Activated CD4-positive, alpha-beta T cell treated with anti-CD3 and anti-CD28 coated beads, Interleukin-2, amount 10 ng/mL, durations not matched to agents 24 days and 14 days (primary cell): ENCODE measurements at regions of chr20 and their contacts with region 1.

Region 1: GRCh38 chr20:8019246-8019997 is at the start of gene TMX4:
- DNase-seq: peak; percentile 97
- H3K4me3 Mint-ChIP-seq: peak within 1 kb of the TSS; percentile 92
- H3K27ac Mint-ChIP-seq: peak within 1 kb of the TSS; percentile 89
- H3K4me1 Mint-ChIP-seq: peaks cover 25% of the 10 kb centered on the region
- H3K27me3 Mint-ChIP-seq: peaks cover 3% of the 10 kb centered on the region
- total RNA-seq, gene TMX4: 27.2 and 32.5 TPM in 2 replicates

Region 2: GRCh38 chr20:7935027-7935551 is 84.3 kb before region 1 on chr20:
- intact Hi-C with region 1: loop called (anchors 5 kb)
- DNase-seq: no peak
- H3K4me3 Mint-ChIP-seq: no peak overlapping the region
- H3K27ac Mint-ChIP-seq: no peak overlapping the region
- H3K4me1 Mint-ChIP-seq: no peaks in the 10 kb centered on the region
- H3K27me3 Mint-ChIP-seq: peaks cover 5% of the 10 kb centered on the region

Region 3: GRCh38 chr20:7980332-7981046 is 38.9 kb before region 1 on chr20:
- intact Hi-C with region 1: loop called (anchors 2 kb)
- DNase-seq: no peak
- H3K4me3 Mint-ChIP-seq: no peak overlapping the region
- H3K27ac Mint-ChIP-seq: no peak overlapping the region
- H3K4me1 Mint-ChIP-seq: peaks cover 9% of the 10 kb centered on the region
- H3K27me3 Mint-ChIP-seq: no peaks in the 10 kb centered on the region

Region 4: DNA sequence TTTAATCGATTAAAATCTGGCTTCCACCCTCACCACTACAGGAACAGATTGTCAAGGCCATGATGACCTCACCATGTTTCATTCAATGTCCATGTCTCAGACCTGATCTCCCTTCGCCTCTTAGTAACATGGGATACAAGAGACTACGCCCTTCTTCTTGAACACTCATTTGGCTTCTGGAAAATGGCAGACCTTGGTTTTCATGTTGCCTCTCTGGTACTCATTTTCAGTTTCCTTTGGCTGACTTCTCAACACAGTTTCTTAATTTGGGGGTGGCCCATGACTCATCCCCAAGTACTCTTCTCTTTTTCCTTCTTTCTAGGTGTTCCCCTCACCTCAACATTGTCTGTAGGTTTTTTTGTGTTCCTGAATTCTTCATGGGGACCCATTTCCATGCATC is 22.5 kb before region 1 on chr20:
- intact Hi-C with region 1: loop called (anchors 2 kb)
- DNase-seq: no peak
- H3K4me3 Mint-ChIP-seq: no peak overlapping the region
- H3K27ac Mint-ChIP-seq: no peak overlapping the region
- H3K4me1 Mint-ChIP-seq: no peaks in the 10 kb centered on the region
- H3K27me3 Mint-ChIP-seq: no peaks in the 10 kb centered on the region